Thyroid gland (tissue), 4 donors: ENCODE measurements at regions of chr3 and their contacts with region 1.

Region 1: DNA sequence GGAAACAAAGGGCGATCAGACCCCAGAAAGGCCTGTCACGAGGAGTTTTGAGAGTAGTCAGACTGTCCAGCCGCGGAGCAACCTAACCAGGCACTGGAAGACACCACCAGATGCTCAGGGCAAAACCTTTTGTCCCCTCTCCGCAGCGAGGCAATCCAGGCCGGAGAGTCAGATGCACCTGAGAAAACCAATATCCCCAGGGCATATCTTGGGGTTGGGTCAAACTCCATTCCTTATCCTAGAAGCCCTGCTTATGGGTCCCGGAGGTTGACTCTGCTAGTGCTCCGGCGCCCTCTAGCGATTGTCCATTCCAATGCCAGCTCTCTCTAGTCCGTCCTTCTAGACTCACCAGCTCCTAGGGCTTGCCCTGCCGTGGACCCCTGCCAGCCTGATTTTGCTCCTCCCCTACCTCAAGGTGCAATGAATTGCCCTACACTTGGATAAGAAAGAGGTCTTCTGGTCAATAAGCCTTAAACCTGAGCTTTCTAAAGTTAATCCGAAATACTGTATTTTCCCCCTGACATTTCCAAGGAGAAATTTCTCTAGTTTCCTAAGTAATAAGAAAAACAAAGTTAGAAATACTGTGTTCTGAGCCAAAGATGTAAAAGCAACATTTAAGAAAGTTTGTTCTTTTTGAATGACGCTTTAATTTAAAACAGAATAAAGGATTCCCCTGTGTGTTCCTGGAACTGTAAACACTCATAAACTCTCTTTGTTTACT is 5.5 kb downstream of the CPNE4 start:
- DNase-seq: peak; percentile 87 to 93
- H3K4me3 ChIP-seq: no peak overlapping the region
- H3K27ac ChIP-seq: no peak overlapping the region
- H3K4me1 ChIP-seq: no peaks in the 10 kb centered on the region
- H3K27me3 ChIP-seq: no peaks in the 10 kb centered on the region
- CTCF ChIP-seq: peak; percentile 54 to 90 (median 81)
- POLR2A ChIP-seq: no peak

Region 2: DNA sequence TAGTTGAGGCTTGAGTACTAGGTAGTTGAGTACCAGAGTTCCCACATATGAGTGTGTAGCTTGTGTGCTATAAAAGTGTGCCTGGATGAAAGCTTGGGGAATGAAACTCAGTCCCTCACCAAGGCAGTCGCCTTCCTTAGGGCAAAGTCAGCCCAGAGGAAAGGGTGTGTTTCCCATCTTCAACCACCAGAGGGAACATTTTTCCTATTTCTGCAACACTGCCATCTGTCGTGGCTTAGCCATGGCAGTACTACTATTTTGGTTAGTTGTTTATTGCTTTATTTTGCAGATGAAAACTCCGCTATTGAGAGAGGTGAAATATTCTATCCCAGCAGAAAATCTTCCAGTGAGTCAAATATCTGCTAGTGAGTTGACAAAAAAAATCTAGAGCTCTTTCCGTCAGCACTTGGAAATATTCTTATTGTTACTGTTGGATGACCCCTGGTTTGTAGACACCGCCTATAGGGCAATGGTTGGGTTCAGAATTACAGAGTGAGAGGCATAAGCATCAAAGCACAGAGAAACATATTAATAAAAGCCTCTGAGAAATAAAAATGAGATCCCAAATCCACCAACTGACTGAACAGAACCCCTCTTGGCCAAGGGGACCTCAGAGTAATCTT is 234.5 kb before region 1 on chr3:
- intact Hi-C with region 1: loop called (anchors 5 kb)
- DNase-seq: peak; percentile 17 to 21
- H3K4me3 ChIP-seq: no peak overlapping the region
- H3K27ac ChIP-seq: no peak overlapping the region
- H3K4me1 ChIP-seq: no peaks in the 10 kb centered on the region
- H3K27me3 ChIP-seq: no peaks in the 10 kb centered on the region
- CTCF ChIP-seq: peak; percentile 70 to 89 (median 78)
- POLR2A ChIP-seq: no peak